ENCODE measurements at regions of chr6 and their contacts with region 1.

Region 1: DNA sequence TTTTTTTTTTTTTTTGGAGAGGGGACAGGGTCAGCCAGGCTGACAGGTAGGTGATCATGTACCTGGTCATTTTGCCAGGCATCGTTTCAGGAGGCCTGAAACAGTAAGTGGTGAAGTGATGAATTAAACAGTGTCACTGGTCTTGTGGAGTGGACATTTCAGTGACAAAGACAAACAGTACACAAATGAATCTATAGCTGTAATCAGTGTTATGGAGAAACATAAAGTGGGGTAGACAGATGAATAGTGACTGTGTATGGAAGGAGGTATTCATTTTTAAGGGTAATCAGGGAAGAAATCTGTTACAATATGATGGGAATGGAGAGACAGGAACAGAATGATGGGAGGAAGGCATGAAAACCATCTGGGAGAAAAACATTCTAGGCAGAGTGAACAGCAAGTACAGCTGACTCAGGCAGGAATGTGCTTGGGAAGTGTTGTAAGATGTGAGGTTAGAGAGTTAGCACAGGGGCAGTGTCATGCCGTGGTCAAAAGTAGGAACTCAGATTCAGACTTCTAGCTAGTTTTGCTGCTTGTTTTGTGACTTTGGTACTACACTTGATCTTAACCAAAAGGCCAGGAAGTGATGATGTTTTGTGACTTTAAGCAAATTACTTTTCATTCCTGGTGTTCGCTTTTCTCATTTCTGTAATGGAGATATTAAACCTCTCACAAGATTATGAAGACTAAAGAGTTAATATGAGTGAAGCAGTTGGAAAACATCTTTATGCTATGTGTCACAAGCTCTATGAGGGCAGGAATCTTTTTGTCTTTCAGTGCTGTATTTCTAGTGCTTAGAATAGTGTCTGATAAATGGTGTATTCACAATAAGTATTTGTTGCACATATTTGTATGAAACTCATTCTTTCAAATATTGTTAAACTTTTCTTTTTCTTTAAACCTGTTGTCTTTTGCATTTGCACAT is 43.4 kb downstream of the QKI start:
- DNase-seq: peak in 1 of 2 donors; percentile 20
- ATAC-seq: peak; percentile 87 to 95 (median 93)
- H3K4me3 ChIP-seq: peak overlapping the region; percentile 20
- H3K27ac ChIP-seq: peak overlapping the region; percentile 73
- H3K4me1 ChIP-seq: peaks cover 95% of the 10 kb centered on the region
- H3K27me3 ChIP-seq: no peaks in the 10 kb centered on the region
- CTCF ChIP-seq: no peak

Region 2: GRCh38 chr6:163490826-163491577 is 33.1 kb after region 1 on chr6:
- intact Hi-C with region 1: loop called in 1 of 2 experiments (anchors 5 kb)
- DNase-seq: peak; percentile 60 to 81
- ATAC-seq: peak; percentile 70 to 82 (median 78)
- H3K4me3 ChIP-seq: peak overlapping the region; percentile 6
- H3K27ac ChIP-seq: peak overlapping the region; percentile 87
- H3K4me1 ChIP-seq: peaks cover 87% of the 10 kb centered on the region
- H3K27me3 ChIP-seq: no peaks in the 10 kb centered on the region
- CTCF ChIP-seq: no peak

Measured in psoas muscle (tissue), 8 donors.